ENCODE measurements at regions of chr1 and their contacts with region 1.

Region 1: DNA sequence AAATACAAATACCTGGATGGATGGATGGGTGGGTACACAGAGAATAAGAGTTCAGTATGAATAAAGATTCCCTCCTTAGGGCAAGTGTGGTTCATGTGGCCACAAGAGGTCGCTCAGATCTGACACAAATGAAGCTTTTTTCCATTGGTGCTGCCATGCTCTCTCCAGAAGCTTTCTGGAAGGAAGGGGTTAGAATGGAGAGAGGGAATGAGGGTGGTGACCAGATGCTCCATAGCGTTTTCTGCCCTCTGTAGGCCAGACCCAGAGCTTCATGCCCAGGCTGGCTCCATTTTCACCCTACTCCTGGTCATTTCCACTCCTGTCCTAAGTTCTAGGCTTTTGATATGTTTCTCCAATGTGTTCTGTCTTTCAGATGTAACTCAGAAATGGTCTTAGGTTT is 3.3 kb upstream of the FCRL6 start:
- DNase-seq: peak; percentile 71
- H3K4me3 ChIP-seq: no peak overlapping the region
- H3K27ac ChIP-seq: no peak overlapping the region
- H3K27me3 ChIP-seq: peaks cover 16% of the 10 kb centered on the region
- CTCF ChIP-seq: peak; percentile 86

Region 2: GRCh38 chr1:159600894-159601293 is 198.0 kb before region 1 on chr1:
- in situ Hi-C with region 1: no loop called
- DNase-seq: no peak
- H3K4me3 ChIP-seq: no peak overlapping the region
- H3K27ac ChIP-seq: no peak overlapping the region
- H3K27me3 ChIP-seq: no peaks in the 10 kb centered on the region
- CTCF ChIP-seq: no peak

Region 3: DNA sequence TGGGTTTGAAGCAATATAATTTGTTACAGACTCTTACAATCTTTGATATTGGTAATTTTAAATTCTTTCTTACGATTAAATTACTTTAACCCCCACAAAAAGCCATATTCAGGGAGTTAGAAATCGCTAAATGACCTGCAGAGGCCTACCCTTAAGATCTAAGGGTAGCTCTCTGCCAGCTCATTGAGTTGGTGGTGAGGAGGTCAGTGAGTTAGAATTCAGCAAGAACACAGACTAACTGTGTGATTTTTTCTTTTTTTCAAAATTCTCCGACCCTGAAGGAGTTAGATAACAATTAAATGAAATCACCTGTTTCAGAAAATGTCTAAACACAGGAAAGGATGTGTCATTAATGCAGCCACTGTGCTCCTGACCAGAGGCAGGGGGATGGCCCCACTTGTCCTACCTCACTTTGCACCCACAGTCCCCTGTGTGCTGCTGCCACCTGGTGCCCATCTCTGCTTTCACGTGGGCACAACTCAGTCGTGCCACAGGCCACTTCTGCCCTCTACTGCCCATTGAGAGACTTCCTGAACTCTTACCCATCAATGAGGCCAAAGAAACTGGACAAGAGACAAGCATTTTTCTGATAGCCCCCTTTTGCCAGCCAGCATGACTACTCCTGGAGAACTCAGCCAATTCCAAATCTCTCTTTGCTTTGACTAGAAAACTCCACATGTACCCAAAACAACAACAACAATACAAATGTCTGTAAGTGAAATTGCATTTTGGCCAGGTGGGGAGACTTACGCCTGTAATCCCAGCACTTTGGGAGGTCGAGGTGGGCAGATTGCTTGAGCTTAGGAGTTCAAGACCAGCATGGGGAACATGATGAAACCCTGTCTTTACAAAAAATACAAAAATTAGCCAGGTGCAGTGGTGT is 92.6 kb after region 1 on chr1:
- in situ Hi-C with region 1: loop called (anchors 5 kb)
- DNase-seq: peak; percentile 86
- H3K4me3 ChIP-seq: no peak overlapping the region
- H3K27ac ChIP-seq: no peak overlapping the region
- H3K27me3 ChIP-seq: no peaks in the 10 kb centered on the region
- CTCF ChIP-seq: peak; percentile 100

Region 4: GRCh38 chr1:160048335-160048734 is 249.4 kb after region 1 on chr1:
- in situ Hi-C with region 1: no loop called
- DNase-seq: no peak
- H3K4me3 ChIP-seq: no peak overlapping the region
- H3K27ac ChIP-seq: no peak overlapping the region
- H3K27me3 ChIP-seq: peaks cover 24% of the 10 kb centered on the region
- CTCF ChIP-seq: no peak

Measured in brain microvascular endothelial cell (primary cell).